ENCODE measurements at regions of chr4 and their contacts with region 1.

Region 1: GRCh38 chr4:146916479-146917076 is 29.1 kb downstream of the TTC29 start:
- DNase-seq: no peak
- ATAC-seq: no peak
- H3K4me3 ChIP-seq: no peak overlapping the region
- H3K27ac ChIP-seq: no peak overlapping the region
- H3K4me1 ChIP-seq: no peaks in the 10 kb centered on the region
- H3K27me3 ChIP-seq: peaks cover 0 to 47% (median 5%) of the 10 kb centered on the region in 9 donors
- CTCF ChIP-seq: peak; percentile 43 to 85 (median 70)
- POLR2A ChIP-seq: no peak

Region 2: DNA sequence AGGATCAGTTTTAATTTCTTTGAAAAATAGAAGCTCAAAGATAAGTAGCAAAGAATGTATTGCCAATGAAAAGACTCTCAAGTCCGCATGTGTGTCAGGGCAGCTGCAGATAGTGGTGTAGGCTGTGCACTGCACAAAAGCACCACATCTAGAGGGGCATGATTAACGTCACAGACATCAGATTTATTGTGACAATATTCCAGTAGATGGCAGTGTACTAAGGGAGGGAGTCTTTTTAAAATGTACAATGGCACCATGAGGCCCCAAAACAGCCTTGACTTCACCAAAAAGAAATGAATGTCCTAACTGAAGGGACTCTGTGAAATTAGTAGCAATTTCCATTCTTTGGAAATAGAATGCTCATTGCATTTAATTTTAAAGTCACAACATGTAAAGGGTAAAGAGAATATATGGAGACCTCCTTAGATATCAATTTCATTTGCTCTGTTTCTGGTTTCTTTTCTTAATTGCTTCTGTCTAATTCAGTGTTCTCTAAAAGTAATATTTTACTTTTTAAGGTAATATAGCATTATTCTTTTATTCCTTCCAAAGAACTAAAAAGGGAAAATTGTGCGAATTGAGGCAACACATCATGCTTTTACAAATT is 1076.3 kb before region 1 on chr4:
- intact Hi-C with region 1: loop called in 1 of 10 experiments (anchors 10 kb)
- DNase-seq: no peak
- ATAC-seq: peak; percentile 58 to 86 (median 80)
- H3K4me3 ChIP-seq: no peak overlapping the region
- H3K27ac ChIP-seq: no peak overlapping the region
- H3K4me1 ChIP-seq: peaks cover 0 to 23% (median 0%) of the 10 kb centered on the region in 12 donors
- H3K27me3 ChIP-seq: no peaks in the 10 kb centered on the region
- CTCF ChIP-seq: peak in 11 of 12 donors; percentile 29 to 69 (median 55)
- POLR2A ChIP-seq: no peak

Region 3: GRCh38 chr4:146243141-146243882 is 673.3 kb before region 1 on chr4:
- intact Hi-C with region 1: loop called in 1 of 10 experiments (anchors 2 kb)
- DNase-seq: peak in 2 of 5 donors; percentile 24 to 65
- ATAC-seq: peak in 1 of 4 donors; percentile 21
- H3K4me3 ChIP-seq: peak overlapping the region in 3 of 12 donors; percentile 1 to 38 (median 4)
- H3K27ac ChIP-seq: peak overlapping the region; percentile 76 to 96 (median 85)
- H3K4me1 ChIP-seq: peaks cover 0 to 54% (median 24%) of the 10 kb centered on the region in 12 donors
- H3K27me3 ChIP-seq: no peaks in the 10 kb centered on the region
- CTCF ChIP-seq: peak; percentile 15 to 58 (median 43)
- POLR2A ChIP-seq: no peak

Region 4: DNA sequence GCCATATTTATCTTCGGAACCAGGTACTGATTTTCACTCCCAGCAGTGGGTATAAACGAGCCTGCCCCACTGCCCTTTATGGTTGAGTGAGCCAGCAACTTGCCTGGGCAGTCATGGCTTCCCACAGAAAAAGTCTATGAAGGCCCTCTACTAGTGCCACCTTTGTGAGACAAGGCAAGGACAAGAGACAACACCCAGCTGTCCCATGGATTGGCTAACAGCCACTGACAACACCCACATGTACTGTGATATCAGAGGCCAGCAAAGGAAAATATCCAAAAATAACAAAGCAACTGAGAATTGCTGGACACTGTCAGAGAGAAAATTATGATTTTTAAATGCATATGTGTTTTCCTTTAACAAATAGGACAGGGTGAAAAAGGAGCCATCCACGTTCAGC is 277.5 kb after region 1 on chr4:
- intact Hi-C with region 1: no loop called
- DNase-seq: peak in 4 of 5 donors; percentile 18 to 43 (median 27)
- ATAC-seq: peak; percentile 77 to 87 (median 80)
- H3K4me3 ChIP-seq: peak overlapping the region in 1 of 12 donors; percentile 17
- H3K27ac ChIP-seq: peak overlapping the region in 2 of 12 donors; percentile 3 to 33
- H3K4me1 ChIP-seq: peaks cover 0 to 10% (median 0%) of the 10 kb centered on the region in 12 donors
- H3K27me3 ChIP-seq: no peaks in the 10 kb centered on the region
- CTCF ChIP-seq: no peak
- POLR2A ChIP-seq: no peak

Measured in heart left ventricle (tissue), 16 donors.